GM18951 (cell line): ENCODE measurements at regions of chr14 and their contacts with region 1.

Region 1: GRCh38 chr14:77529963-77530362 is 31.3 kb upstream of the ISM2 start:
- POLR2A ChIP-seq: no peak

Region 2: DNA sequence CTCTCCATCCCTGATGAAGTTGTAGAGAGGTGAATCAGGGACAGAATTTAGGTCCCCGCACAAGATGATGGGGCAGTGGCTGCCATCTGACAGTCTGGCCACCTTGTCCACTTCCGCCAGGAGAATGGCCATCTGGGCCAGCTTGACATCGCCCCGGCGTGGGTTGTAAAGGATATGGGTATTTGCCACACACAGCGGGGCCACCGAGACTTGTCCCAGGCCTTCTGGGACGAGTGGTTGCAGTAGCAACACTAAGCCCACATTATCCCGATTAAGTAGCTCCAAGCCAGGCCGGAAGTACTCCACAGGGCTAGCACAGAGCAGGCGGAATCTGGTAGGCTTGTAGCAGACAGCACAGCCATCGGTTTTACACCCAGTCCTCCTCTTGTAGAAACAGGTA is 723.5 kb before region 1 on chr14:
- in situ Hi-C with region 1: no loop called
- POLR2A ChIP-seq: no peak

Region 3: GRCh38 chr14:77170045-77170444 is 359.9 kb before region 1 on chr14:
- in situ Hi-C with region 1: no loop called
- POLR2A ChIP-seq: no peak

Region 4: GRCh38 chr14:77181603-77182437 is 348.1 kb before region 1 on chr14 and contains the start of gene TMEM63C:
- in situ Hi-C with region 1: no loop called
- POLR2A ChIP-seq: no peak

Region 5: GRCh38 chr14:77469539-77469938 is 60.4 kb before region 1 on chr14:
- in situ Hi-C with region 1: loop called (anchors 10 kb)
- POLR2A ChIP-seq: no peak

Region 6: DNA sequence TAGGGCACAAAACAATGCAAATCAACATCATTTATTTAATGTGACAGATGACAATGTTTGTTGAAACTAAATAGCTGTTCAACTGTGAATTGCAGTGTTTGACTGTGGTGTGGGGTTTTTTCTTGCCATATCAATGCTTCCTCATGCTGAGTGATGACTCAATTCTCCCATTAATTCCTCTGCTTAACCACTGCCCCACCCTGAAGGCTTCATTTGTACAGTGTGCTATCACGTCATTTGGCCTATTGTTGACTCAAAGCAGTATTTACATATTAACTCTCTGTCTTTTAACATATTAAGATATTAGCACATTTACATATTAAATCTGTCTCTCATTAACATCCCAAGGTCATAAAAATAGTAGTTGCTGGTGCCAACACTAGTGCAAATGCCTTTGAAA is 475.4 kb after region 1 on chr14:
- in situ Hi-C with region 1: no loop called
- POLR2A ChIP-seq: no peak